Activated B cell treated with CpG ODN at 0.5 μM for 24 hours (primary cell): ENCODE measurements at regions of chrX and their contacts with region 1.

Region 1: DNA sequence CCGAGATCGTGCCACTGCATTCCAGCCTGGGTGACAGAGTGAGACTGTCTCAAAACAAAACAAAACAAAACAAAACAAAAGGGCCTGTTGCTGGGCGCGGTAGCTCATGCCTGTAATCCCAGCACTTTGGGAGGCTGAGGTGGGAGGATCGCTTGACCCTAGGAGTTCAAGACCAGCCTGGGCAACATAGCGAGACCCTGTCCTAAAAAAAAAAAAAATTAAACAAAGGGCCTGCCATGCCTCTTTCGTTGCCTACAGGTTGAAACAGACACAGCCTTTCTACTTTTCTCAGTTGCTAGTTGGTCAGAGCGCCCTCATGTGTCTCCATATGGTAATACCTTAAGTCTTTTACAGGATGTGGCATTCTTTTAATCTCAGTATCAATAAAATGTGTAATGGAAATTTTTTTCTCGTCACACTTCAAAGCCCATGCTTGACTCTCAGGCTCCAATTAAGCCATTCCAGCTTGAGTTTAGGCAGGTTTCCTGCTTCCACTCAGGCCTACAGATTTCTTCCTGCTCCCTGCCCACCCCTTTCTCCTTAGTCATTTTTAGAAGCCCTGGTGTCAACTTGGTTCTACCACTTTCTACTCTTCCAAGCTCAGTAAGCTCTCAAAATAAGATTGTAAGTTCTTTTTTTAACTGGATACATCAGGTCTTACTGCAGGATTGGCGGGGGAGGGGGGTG is 4.7 kb upstream of the SOWAHD start:
- DNase-seq: no peak
- ATAC-seq: peak; percentile 5
- H3K4me3 Mint-ChIP-seq: peak overlapping the region; percentile 50
- H3K27ac Mint-ChIP-seq: peak overlapping the region; percentile 98
- H3K4me1 Mint-ChIP-seq: peaks cover 44% of the 10 kb centered on the region
- H3K27me3 Mint-ChIP-seq: no peaks in the 10 kb centered on the region
- CTCF ChIP-seq: no peak

Region 2: GRCh38 chrX:119574394-119575266 is 179.1 kb before region 1 on chrX and contains the start of gene UBE2A:
- CTCF ChIA-PET with region 1: no interaction called
- POLR2A ChIA-PET with region 1: interaction called, 20 read pairs
- intact Hi-C with region 1: no loop called
- DNase-seq: peak; percentile 78
- ATAC-seq: peak; percentile 94
- H3K4me3 Mint-ChIP-seq: peak within 1 kb of the TSS; percentile 93
- H3K27ac Mint-ChIP-seq: peak within 1 kb of the TSS; percentile 91
- H3K4me1 Mint-ChIP-seq: peaks cover 38% of the 10 kb centered on the region
- H3K27me3 Mint-ChIP-seq: no peaks in the 10 kb centered on the region
- CTCF ChIP-seq: no peak
- total RNA-seq, gene UBE2A: 65.9 and 73.5 TPM in 2 replicates

Region 3: DNA sequence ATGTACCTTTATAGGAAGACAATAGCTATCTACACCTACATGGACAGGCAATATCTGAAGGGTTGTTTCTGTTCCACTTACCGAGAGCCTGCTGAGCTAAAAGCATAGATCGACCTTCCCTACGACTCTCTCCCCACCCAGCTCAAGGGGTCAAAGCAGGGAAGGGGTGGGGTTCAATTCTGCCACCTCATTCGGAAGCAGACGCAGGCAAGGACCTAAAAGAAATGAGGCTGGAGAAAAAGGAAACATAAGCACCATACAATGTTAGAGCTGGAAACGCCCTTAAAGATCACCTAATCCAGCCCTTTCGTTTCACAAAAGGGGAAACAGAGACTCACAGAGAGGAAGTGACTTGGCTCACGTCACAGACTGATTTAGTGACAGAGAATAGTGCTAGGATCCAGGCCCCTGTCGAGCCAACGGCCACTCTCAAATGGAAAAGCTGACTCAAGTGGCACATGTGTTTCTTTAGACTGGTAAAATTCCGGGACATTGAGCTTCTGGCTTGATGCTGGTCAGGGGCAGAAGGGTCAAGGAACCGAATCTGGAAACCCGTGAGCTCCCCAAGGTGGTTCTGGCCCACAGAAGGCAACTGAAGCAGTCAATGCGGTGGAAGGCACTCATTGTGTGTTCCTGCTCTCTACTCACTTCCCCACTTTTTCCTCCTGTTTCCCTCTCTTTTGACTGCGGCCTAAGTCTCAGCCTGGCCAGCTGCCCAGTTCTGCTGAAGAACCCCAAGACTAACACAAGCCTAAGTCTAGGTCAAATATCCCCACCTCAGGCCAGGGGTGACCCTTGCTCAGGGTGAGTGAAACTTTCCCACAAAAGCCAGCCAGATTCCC is 68.3 kb before region 1 on chrX:
- CTCF ChIA-PET with region 1: no interaction called
- POLR2A ChIA-PET with region 1: interaction called, 14 read pairs
- intact Hi-C with region 1: no loop called
- DNase-seq: no peak
- ATAC-seq: peak; percentile 65
- H3K4me3 Mint-ChIP-seq: peak overlapping the region; percentile 83
- H3K27ac Mint-ChIP-seq: peak overlapping the region; percentile 99
- H3K4me1 Mint-ChIP-seq: peaks cover 89% of the 10 kb centered on the region
- H3K27me3 Mint-ChIP-seq: no peaks in the 10 kb centered on the region
- CTCF ChIP-seq: no peak

Region 4: GRCh38 chrX:119729408-119730201 is 24.1 kb before region 1 on chrX:
- CTCF ChIA-PET with region 1: interaction called, 5 read pairs
- POLR2A ChIA-PET with region 1: no interaction called
- intact Hi-C with region 1: loop called (anchors 2 kb)
- DNase-seq: peak; percentile 30
- ATAC-seq: peak; percentile 57
- H3K4me3 Mint-ChIP-seq: no peak overlapping the region
- H3K27ac Mint-ChIP-seq: no peak overlapping the region
- H3K4me1 Mint-ChIP-seq: peaks cover 2% of the 10 kb centered on the region
- H3K27me3 Mint-ChIP-seq: no peaks in the 10 kb centered on the region
- CTCF ChIP-seq: no peak

Region 5: DNA sequence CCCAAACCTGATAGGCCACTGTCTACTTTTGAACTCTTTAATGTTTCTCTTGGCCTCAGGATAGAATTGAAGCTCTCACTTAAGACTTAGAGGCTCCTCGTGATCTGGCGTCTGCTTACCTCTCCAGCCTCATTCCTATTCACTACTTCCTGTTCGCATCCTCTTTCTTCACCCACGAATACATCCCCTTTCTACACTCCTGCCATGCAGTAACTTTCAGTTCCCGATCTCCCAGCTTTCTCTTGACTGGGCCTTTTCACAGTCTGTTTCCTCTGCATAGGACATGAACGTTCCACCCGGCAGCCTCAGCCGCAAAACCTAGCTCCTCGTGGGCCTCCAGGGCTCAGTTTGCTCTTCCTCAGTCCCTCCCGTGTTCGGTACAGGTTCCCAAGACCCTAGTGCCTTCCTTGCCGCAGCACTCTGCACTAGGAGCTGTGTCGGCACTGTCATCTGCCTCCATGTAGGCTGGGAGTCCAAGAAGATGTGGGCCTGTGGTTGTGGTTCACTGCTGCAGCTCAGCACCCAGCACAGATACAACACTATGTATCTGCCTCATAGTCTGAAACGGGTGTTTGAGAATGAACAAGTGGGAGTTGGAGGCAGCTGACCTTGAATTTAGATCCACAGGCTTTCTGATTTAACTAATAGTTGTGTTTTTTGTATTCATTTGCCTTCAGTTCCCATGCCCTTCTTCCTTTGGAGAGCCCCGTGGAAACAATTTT is 22.0 kb after region 1 on chrX:
- CTCF ChIA-PET with region 1: interaction called, 6 read pairs
- POLR2A ChIA-PET with region 1: interaction called, 27 read pairs
- intact Hi-C with region 1: loop called (anchors 1 kb)
- DNase-seq: no peak
- ATAC-seq: peak; percentile 21
- H3K4me3 Mint-ChIP-seq: peak overlapping the region; percentile 28
- H3K27ac Mint-ChIP-seq: peak overlapping the region; percentile 85
- H3K4me1 Mint-ChIP-seq: peaks cover 27% of the 10 kb centered on the region
- H3K27me3 Mint-ChIP-seq: no peaks in the 10 kb centered on the region
- CTCF ChIP-seq: no peak

Region 6: GRCh38 chrX:120000490-120001246 is 247.0 kb after region 1 on chrX:
- CTCF ChIA-PET with region 1: no interaction called
- POLR2A ChIA-PET with region 1: no interaction called
- intact Hi-C with region 1: no loop called
- DNase-seq: no peak
- ATAC-seq: no peak
- H3K4me3 Mint-ChIP-seq: peak overlapping the region; percentile 53
- H3K27ac Mint-ChIP-seq: no peak overlapping the region
- H3K4me1 Mint-ChIP-seq: peaks cover 26% of the 10 kb centered on the region
- H3K27me3 Mint-ChIP-seq: peaks cover 34% of the 10 kb centered on the region
- CTCF ChIP-seq: no peak